Left ventricle myocardium superior (tissue), 1 donor: ENCODE measurements at regions of chr18 and their contacts with region 1.

Region 1: DNA sequence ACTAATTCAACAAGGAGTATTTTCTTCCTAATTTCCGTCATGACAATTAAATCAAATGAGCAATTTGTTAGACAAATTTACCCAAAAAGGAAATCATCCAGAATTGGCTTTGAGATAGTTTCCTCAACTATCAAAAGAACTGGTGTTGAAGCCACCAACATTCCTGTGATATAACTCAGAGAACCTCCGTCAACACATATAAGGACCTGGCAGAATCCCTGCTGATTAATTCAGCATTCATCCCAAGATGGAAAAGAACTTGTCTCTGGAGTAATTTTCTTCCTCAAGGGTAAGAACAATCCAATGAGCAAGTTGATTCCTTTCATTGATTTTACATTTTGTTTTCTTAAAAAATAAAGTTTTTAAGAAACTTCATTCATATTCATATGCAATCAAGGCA is 62.0 kb downstream of the MBD2 start:
- DNase-seq: no peak
- ATAC-seq: no peak

Region 2: DNA sequence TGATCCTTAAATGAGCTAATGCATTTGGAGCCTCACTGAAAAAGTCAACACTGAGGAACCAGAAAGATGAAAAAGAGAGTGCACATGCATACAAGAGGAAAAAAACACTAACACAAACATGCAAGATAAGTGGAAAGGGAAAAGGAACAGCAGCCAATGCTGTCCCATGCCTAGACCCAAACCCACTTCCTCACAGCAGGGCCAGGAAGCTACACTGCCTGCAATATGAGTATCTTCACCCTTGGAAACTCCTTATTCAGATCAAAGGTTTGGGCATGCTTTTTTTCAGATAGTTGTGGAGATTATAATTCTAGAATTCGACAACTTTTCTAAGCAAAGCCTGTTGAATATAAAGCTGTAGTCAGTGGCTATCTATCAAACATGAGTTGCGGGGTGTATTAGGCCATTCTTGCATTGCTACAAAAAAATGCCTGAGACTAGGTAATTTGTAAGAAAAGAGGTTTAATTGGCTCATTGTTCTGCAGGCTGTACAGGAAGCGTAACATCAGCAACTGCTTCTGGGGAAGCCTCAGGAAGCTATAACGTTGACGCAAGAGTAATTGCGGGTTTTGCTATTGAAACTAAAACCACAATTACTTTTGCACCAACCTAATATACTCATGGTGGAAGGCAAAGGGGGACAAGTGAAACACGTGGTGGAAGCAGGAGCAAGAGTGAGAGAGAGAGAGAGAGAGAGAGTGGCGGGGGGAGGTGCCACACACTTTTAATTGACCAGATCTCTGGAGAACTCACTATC is 76.2 kb before region 1 on chr18:
- intact Hi-C with region 1: no loop called
- DNase-seq: no peak
- ATAC-seq: no peak

Region 3: DNA sequence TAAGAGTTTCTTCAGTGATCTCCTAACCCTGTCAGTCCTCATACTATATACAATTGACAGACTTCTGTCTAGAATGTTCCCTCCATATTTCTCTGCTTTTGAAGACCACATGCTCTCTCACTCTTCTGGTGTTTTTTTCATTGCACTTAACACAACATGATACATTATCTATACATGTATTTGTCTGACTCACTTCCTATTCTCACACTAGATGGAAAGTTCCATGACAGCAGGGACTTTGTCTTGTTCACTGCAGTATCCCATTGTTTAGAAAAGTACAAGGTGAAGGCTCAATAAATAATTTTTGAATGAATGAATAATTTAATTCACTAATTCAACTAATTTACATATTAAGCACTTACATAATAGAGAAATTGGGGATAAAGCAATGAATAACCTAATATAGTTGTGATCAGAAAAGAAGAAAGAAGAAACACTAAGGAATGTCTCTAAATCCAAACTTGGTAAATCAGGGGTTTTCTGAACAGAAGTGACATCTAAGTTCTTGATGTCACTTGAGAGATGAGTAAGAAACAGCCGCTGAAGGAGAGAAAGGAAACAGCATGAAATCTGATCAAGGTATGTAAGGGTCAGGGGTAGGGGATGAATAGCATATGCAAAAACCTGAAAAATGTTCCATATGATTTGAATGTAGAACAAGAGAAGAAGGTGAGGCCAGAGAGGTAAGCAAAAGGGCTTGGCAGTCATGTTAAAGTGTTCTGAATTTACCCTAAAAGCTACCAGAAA is 19.6 kb after region 1 on chr18:
- intact Hi-C with region 1: no loop called
- DNase-seq: no peak
- ATAC-seq: no peak

Region 4: DNA sequence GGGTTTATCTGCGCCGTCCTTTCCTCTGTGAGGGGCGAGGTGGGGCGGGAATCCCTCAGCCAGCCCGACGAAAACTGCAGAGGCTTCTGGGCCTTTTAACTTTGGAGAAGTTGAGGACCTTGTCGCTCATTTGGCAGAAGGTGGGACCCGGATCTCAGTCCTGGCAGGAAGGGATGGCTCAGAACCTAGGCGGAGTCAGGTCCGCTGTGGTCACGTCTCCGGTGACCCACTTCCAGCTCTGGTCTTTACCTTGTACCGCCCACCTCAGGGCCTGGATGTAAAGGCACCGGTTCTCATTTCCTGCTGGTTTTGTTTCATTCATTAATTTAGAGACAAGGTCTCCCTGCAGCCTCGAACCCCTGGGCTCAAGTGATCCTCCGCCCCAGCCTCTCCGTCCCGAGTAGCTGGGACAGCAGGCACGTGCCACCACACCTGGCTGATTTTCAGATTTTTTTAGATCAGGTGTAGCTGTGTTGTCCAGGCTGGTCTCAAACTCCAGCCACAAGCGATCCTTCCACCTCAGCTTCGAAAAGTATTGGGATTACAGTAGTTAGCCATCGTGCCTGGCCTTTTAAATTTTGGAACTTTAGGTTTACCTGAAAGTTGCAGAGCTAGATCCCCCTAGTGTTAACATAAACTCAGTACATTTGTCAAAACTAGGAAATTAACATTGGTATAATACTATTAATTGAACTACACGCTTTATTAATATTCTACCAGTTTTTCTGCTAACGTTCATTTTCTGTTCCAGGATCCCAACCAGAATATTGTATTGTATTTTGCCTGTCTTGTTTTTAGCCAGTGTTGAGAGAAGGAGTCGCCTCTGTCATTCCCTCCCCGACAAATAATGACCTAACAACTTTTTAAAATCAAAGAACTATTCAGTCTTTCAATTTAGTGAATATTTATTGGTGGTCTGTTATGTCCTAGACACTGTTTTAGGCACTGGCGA is 107.7 kb after region 1 on chr18:
- intact Hi-C with region 1: loop called (anchors 10 kb)
- DNase-seq: no peak
- ATAC-seq: peak; percentile 58